Lower leg skin (tissue), 4 donors: ENCODE measurements at regions of chr3 and their contacts with region 1.

Region 1: GRCh38 chr3:138928727-138929385 is 18.1 kb downstream of the FOXL2 start:
- DNase-seq: no peak
- H3K4me3 ChIP-seq: no peak overlapping the region
- CTCF ChIP-seq: no peak
- POLR2A ChIP-seq: no peak

Region 2: GRCh38 chr3:138417559-138417982 is 511.3 kb before region 1 on chr3:
- intact Hi-C with region 1: loop called (anchors 5 kb)
- DNase-seq: peak; percentile 73 to 94
- H3K4me3 ChIP-seq: no peak overlapping the region
- CTCF ChIP-seq: peak in 1 of 3 donors; percentile 33
- POLR2A ChIP-seq: no peak

Region 3: GRCh38 chr3:138995706-138996105 is 66.8 kb after region 1 on chr3:
- intact Hi-C with region 1: no loop called
- DNase-seq: no peak
- H3K4me3 ChIP-seq: no peak overlapping the region
- CTCF ChIP-seq: no peak
- POLR2A ChIP-seq: no peak